ENCODE measurements at regions of chr1 and their contacts with region 1.

Region 1: GRCh38 chr1:111183308-111184069 is 17.0 kb downstream of the DENND2D start:
- DNase-seq: no peak
- H3K4me3 ChIP-seq: no peak overlapping the region
- H3K27ac ChIP-seq: no peak overlapping the region
- H3K4me1 ChIP-seq: no peaks in the 10 kb centered on the region
- CTCF ChIP-seq: no peak

Region 2: DNA sequence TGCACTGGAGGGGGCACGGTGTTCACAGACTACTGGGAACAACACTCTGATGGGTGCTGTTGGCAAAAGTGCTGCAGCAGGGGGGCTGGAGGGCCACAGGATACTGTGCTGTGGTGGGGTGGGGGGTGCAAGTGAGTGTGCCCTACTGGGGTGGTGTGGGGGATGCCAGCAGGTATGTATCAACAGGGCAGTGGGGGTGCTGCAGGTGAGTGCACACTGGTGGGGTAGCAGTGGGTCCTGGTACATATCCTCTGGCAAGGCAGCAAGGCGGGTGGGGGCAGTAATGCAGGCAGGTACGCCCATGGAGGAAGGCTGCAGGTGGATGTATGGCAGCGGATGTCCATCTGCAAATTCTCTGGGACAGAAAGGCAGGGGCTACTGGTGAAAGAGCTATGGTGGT is 359.3 kb before region 1 on chr1:
- CTCF ChIA-PET with region 1: no interaction called
- POLR2A ChIA-PET with region 1: no interaction called
- intact Hi-C with region 1: no loop called
- DNase-seq: no peak
- H3K4me3 ChIP-seq: no peak overlapping the region
- H3K27ac ChIP-seq: no peak overlapping the region
- H3K4me1 ChIP-seq: peaks cover 4% of the 10 kb centered on the region
- CTCF ChIP-seq: no peak

Region 3: DNA sequence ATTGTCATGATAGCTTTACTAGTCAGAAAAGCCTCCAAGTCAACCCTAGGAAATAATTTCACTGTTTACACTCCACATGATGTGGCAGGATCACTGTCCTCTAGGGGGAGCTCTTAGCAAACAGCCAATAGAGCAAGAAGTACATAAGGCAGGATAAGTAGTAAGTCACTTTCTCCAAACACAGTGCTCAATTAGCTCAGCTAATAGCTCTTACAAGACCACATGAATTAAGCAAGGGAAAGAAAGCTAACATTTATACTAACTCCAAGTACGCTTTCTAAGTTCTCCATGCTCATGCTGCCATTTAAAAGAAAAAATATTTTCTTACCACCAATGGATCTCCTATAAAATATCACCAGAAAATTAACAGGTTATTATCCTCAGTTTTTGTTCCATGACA is 152.9 kb before region 1 on chr1:
- CTCF ChIA-PET with region 1: no interaction called
- POLR2A ChIA-PET with region 1: no interaction called
- intact Hi-C with region 1: no loop called
- DNase-seq: peak; percentile 83
- H3K4me3 ChIP-seq: no peak overlapping the region
- H3K27ac ChIP-seq: no peak overlapping the region
- H3K4me1 ChIP-seq: no peaks in the 10 kb centered on the region
- CTCF ChIP-seq: peak; percentile 98

Region 4: DNA sequence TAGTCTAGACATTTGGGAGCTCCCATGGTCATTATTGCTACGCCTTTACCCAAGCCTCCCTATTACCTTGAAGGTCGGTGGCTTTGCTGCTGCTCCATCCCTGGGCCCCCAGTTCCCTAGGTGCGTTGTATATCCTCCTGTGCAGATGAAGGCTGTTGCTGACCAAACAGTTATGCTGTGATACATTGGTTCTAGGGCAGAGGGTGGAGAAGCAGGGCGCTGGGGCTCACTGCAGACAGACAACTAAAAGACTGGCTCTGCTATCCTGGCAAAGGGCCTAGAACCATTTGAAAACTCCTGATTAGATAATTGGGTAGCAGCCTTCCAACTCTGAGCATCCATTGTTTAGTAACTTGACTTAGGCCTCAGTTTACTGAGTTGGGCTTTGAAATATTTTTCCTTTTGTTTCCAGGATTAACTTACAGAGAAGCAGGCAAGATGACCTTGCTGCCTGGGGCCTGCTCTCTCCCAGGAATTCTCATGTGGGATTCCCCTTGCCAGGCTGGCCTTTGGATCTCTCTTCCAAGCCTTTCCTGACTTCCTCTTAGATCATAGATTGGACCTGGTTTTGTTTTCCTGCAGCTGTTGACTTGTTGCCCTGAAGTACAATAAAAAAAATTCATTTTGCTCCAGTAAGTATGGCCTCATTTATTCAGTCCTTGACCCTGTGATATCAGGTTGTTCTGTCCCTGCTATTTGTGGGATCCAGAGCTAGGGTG is 59.5 kb after region 1 on chr1:
- CTCF ChIA-PET with region 1: no interaction called
- POLR2A ChIA-PET with region 1: no interaction called
- intact Hi-C with region 1: no loop called
- DNase-seq: no peak
- H3K4me3 ChIP-seq: no peak overlapping the region
- H3K27ac ChIP-seq: no peak overlapping the region
- H3K4me1 ChIP-seq: no peaks in the 10 kb centered on the region
- CTCF ChIP-seq: no peak

Region 5: GRCh38 chr1:111320106-111320879 is 136.8 kb after region 1 on chr1:
- CTCF ChIA-PET with region 1: no interaction called
- POLR2A ChIA-PET with region 1: no interaction called
- intact Hi-C with region 1: no loop called
- DNase-seq: no peak
- H3K4me3 ChIP-seq: no peak overlapping the region
- H3K27ac ChIP-seq: no peak overlapping the region
- H3K4me1 ChIP-seq: no peaks in the 10 kb centered on the region
- CTCF ChIP-seq: no peak

Region 6: GRCh38 chr1:111334169-111334568 is 150.7 kb after region 1 on chr1:
- CTCF ChIA-PET with region 1: no interaction called
- POLR2A ChIA-PET with region 1: no interaction called
- intact Hi-C with region 1: loop called (anchors 5 kb)
- DNase-seq: peak; percentile 74
- H3K4me3 ChIP-seq: no peak overlapping the region
- H3K27ac ChIP-seq: no peak overlapping the region
- H3K4me1 ChIP-seq: no peaks in the 10 kb centered on the region
- CTCF ChIP-seq: peak; percentile 95